Activated CD8-positive, alpha-beta T cell treated with anti-CD3 and anti-CD28 coated beads for 36 hours (primary cell): ENCODE measurements at regions of chr1 and their contacts with region 1.

Region 1: DNA sequence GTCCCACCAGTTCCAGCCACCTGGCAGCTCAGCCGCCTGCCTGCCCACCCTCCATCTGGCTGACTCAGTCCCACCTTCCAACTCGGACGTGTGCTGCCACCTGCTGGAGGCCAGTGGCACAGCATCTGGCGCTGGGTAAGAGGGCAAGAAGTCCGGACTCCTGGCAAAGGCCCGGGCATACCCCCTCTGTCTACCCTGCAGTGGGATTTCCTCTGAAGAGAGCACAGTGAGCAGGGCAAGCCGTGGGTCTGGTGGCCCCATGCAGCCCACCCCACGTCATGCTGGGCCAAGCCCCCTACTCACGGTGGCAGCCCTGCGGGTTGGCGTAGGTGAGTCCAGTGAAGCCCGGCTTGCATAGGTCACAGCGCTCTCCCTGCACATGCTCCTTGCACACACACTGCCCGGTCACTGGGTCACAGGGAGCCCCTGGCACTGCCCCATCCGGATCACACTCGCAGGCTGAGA is 24.5 kb downstream of the LAMB3 start:
- DNase-seq: peak; percentile 88
- ATAC-seq: peak; percentile 98
- H3K4me3 Mint-ChIP-seq: no peak overlapping the region
- H3K27ac Mint-ChIP-seq: no peak overlapping the region
- H3K4me1 Mint-ChIP-seq: no peaks in the 10 kb centered on the region
- H3K27me3 Mint-ChIP-seq: peaks cover 2% of the 10 kb centered on the region
- CTCF ChIP-seq: peak; percentile 96

Region 2: DNA sequence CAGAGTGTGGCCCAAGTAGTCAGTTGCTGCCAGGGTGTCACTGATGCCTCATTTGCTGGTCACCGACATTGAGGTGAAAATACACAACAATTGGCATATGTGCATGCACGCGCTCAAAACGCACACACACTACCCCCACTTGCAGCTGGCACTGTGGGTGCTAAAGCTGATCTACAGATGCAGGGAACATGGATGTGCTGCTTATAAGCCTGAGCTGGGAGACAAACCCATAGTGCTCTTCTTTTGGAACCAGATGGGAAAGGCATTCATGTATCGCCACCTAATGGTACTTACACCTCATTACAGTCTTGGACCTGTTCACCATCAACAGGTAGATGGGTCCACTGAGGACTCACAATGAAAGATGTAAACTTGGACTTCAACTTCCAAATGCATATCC is 114.5 kb before region 1 on chr1:
- CTCF ChIA-PET with region 1: no interaction called
- POLR2A ChIA-PET with region 1: no interaction called
- intact Hi-C with region 1: no loop called
- DNase-seq: no peak
- ATAC-seq: peak; percentile 37
- H3K4me3 Mint-ChIP-seq: no peak overlapping the region
- H3K27ac Mint-ChIP-seq: no peak overlapping the region
- H3K4me1 Mint-ChIP-seq: no peaks in the 10 kb centered on the region
- H3K27me3 Mint-ChIP-seq: peaks cover 14% of the 10 kb centered on the region
- CTCF ChIP-seq: peak; percentile 63

Region 3: GRCh38 chr1:209576798-209577197 is 51.0 kb before region 1 on chr1:
- CTCF ChIA-PET with region 1: interaction called, 17 read pairs
- POLR2A ChIA-PET with region 1: no interaction called
- intact Hi-C with region 1: loop called (anchors 5 kb)
- DNase-seq: peak; percentile 78
- ATAC-seq: peak; percentile 97
- H3K4me3 Mint-ChIP-seq: no peak overlapping the region
- H3K27ac Mint-ChIP-seq: no peak overlapping the region
- H3K4me1 Mint-ChIP-seq: no peaks in the 10 kb centered on the region
- H3K27me3 Mint-ChIP-seq: peaks cover 3% of the 10 kb centered on the region
- CTCF ChIP-seq: peak; percentile 95

Region 4: DNA sequence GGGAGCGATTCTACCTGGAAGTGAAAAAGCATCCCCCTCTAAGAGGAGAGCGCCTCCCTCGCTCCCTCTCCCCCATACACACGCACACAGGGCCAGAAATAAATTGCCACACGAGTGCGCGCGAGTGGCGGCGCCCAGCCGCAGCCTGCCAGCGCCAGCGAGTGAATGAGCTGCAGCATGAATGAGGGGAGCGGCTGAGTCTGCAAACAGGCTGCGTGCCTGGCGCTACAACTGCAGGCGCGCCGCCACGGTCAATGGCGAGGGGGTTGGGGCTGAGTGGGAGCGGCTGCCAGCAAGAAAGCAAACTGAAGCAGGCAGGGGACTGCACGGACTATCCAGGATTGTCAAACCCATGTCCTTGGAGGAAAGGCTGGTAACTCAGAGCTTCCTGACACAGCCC is 42.1 kb before region 1 on chr1:
- CTCF ChIA-PET with region 1: interaction called, 15 read pairs
- POLR2A ChIA-PET with region 1: no interaction called
- intact Hi-C with region 1: no loop called
- DNase-seq: peak; percentile 17
- ATAC-seq: peak; percentile 39
- H3K4me3 Mint-ChIP-seq: no peak overlapping the region
- H3K27ac Mint-ChIP-seq: no peak overlapping the region
- H3K4me1 Mint-ChIP-seq: no peaks in the 10 kb centered on the region
- H3K27me3 Mint-ChIP-seq: peaks cover 7% of the 10 kb centered on the region
- CTCF ChIP-seq: no peak

Region 5: DNA sequence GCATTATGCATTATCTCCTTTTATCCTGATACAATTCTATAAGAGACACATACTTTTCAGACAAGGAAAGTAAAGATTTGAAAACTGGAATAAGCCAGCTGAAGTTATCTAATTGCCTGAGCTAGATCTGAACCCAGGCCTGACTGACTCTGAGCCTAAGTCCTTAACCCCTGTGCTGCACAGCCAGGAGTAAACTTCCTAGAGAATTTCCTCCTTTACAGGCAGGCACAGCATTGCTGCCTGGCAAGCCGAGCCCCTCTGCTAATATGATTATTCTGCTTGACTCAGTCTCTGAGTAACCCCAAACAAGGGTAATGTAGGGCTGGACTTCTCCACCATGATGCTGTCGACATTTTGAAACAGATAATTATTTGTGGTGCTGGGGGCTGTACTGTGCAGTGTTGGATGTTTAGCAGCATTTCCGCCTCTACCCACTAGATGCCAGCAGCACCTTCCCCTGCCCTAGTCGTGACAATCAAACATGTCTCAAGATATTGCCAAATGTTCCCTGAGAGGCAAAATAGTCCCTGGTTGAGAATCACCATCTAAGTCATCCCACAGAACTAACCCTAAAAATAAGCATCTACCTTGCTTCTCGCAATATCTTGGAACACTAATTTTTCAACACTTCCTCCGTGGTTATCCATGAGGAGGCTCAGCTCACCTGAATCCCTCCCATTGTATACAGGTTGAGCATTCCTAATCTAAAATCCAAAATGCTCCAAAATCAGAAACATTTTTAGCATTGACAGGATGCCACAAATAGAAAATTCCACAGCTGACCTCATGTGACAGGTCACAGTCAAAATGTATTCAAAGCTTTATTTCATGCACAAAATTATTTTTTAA is 25.7 kb before region 1 on chr1:
- CTCF ChIA-PET with region 1: interaction called, 15 read pairs
- POLR2A ChIA-PET with region 1: no interaction called
- intact Hi-C with region 1: no loop called
- DNase-seq: peak; percentile 63
- ATAC-seq: peak; percentile 97
- H3K4me3 Mint-ChIP-seq: no peak overlapping the region
- H3K27ac Mint-ChIP-seq: no peak overlapping the region
- H3K4me1 Mint-ChIP-seq: no peaks in the 10 kb centered on the region
- H3K27me3 Mint-ChIP-seq: peaks cover 13% of the 10 kb centered on the region
- CTCF ChIP-seq: peak; percentile 62

Region 6: DNA sequence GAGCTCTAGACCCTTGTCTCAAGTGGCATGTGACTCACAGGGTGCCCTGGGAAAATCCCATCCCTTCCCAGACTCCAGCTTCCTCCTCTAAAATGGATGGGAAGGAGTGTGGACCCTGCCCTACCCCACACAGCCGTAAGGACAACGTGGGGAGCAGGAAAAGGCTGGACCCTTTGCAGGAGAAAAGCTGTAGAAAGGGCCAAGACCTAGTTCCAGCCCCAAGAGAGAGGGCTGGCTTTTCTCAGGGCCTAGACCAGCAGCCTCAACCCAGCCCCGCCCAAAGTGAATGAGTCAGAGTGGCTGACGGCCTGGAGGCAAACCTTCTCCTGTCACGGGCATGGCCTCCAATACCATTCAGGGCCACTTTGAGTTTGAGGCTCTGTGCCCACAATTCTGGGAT is 23.4 kb after region 1 on chr1:
- CTCF ChIA-PET with region 1: interaction called, 25 read pairs
- POLR2A ChIA-PET with region 1: no interaction called
- intact Hi-C with region 1: no loop called
- DNase-seq: peak; percentile 79
- ATAC-seq: peak; percentile 94
- H3K4me3 Mint-ChIP-seq: no peak overlapping the region
- H3K27ac Mint-ChIP-seq: no peak overlapping the region
- H3K4me1 Mint-ChIP-seq: peaks cover 28% of the 10 kb centered on the region
- H3K27me3 Mint-ChIP-seq: no peaks in the 10 kb centered on the region
- CTCF ChIP-seq: no peak